ENCODE measurements at regions of chr12 and their contacts with region 1.

Region 1: DNA sequence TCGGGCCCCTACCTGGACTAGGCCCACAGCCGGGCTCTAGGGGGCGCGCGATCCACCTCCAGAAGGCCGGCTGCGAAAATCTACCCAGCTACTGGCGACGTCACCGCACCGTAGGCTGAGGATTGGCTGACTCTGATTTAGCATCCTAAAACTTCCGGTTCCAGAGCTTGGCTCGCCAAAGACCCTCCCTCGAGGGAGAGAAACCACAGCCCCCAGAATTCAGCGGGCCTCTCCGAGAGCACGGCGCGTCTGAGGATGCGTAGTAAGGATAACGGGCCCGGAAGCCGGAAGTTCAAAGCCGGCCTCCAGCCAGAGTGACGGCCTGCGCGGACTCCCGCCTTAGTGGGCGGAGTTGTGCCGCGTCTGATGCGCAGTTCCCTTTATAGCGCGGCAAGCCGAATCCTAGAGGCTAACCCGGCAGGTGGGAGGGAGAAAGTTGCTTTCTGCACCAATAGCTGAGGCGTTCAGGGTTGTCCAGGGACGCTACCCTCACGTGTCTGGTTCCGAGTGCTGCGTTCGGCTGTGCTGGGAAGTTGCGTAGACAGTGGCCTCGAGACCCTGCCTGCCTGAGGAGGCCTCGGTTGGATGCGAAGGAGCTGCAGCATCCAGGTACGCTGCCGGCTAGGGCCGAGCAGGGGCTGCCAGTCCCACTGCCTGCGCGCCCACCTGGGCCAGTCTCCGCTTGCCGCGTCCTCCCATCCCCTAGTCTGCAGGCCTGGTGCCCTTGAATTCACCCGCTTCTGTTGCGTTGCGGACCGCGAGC is at the start of gene COX14:
- DNase-seq: peak; percentile 100
- ATAC-seq: peak; percentile 77
- H3K4me3 ChIP-seq: peak within 1 kb of the TSS; percentile 51 to 99 (median 88)
- H3K4me3 Mint-ChIP-seq: peak within 1 kb of the TSS; percentile 96
- H3K27ac ChIP-seq: peak within 1 kb of the TSS; percentile 85 to 96
- H3K27ac Mint-ChIP-seq: peak within 1 kb of the TSS; percentile 98
- H3K4me1 ChIP-seq: peaks cover 30 to 62% of the 10 kb centered on the region in 2 donors
- H3K4me1 Mint-ChIP-seq: peaks cover 65% of the 10 kb centered on the region
- H3K27me3 ChIP-seq: no peaks in the 10 kb centered on the region
- H3K27me3 Mint-ChIP-seq: no peaks in the 10 kb centered on the region
- CTCF ChIP-seq: peak; percentile 28
- total RNA-seq, gene COX14: 31.8 and 33.8 TPM in 2 replicates

Region 2: DNA sequence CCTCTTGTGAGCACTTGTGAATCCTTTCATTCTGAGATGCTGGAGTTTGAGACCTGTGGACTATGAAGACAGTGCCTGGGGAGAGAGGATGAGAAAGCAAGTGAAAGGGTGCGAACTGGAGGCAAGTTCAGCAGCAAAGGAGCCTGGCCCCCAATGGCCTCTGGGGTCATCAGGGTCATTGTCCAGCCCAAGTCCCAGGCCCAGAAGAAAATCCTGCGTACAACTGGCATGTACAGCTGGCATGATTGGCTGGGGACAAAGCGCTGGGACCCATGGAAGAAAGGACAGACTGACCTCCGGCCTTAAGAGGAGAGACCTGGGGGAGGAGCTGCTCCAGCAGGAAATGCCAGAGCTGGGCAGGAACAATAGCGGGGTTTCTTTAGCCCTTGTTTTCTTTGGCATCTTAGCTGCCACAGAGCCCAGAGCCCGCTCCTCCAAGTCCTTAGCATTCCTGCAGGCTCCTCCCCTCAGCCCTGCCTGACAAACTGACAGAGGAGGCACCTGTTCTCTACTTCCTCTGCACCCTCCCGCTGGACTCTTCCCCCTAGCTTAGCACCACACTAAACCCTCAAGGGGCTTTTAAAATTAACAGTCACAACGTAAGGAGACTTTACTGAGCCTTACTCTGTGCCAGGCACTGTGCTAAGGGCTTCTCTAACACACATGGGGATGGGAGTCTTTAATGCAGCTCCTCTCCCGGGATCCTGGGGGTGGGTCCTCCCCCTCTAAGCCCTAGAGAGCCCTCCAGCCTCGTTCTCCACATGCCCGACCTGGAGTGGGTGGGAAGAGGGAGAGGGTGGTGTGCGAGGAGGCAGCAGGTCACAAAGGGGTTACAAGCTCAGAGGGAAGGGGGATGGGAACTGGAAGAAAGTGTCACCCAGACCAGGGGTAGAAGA is 152.1 kb before region 1 on chr12:
- CTCF ChIA-PET with region 1: no interaction called
- POLR2A ChIA-PET with region 1: no interaction called
- intact Hi-C with region 1: no loop called
- DNase-seq: no peak
- ATAC-seq: no peak
- H3K4me3 ChIP-seq: no peak overlapping the region
- H3K4me3 Mint-ChIP-seq: peak overlapping the region; percentile 56
- H3K27ac ChIP-seq: no peak overlapping the region
- H3K27ac Mint-ChIP-seq: no peak overlapping the region
- H3K4me1 ChIP-seq: peaks cover 11 to 16% of the 10 kb centered on the region in 2 donors
- H3K4me1 Mint-ChIP-seq: peaks cover 9% of the 10 kb centered on the region
- H3K27me3 ChIP-seq: peaks cover 0 to 71% (median 22%) of the 10 kb centered on the region in 4 experiments
- H3K27me3 Mint-ChIP-seq: peaks cover 71% of the 10 kb centered on the region
- CTCF ChIP-seq: no peak

Region 3: GRCh38 chr12:50006789-50007436 is 105.0 kb before region 1 on chr12:
- CTCF ChIA-PET with region 1: no interaction called
- POLR2A ChIA-PET with region 1: no interaction called
- intact Hi-C with region 1: no loop called
- DNase-seq: no peak
- ATAC-seq: no peak
- H3K4me3 ChIP-seq: no peak overlapping the region
- H3K4me3 Mint-ChIP-seq: no peak overlapping the region
- H3K27ac ChIP-seq: no peak overlapping the region
- H3K27ac Mint-ChIP-seq: no peak overlapping the region
- H3K4me1 ChIP-seq: peaks cover 3 to 7% of the 10 kb centered on the region in 2 donors
- H3K4me1 Mint-ChIP-seq: peaks cover 13% of the 10 kb centered on the region
- H3K27me3 ChIP-seq: no peaks in the 10 kb centered on the region
- H3K27me3 Mint-ChIP-seq: no peaks in the 10 kb centered on the region
- CTCF ChIP-seq: no peak

Region 4: DNA sequence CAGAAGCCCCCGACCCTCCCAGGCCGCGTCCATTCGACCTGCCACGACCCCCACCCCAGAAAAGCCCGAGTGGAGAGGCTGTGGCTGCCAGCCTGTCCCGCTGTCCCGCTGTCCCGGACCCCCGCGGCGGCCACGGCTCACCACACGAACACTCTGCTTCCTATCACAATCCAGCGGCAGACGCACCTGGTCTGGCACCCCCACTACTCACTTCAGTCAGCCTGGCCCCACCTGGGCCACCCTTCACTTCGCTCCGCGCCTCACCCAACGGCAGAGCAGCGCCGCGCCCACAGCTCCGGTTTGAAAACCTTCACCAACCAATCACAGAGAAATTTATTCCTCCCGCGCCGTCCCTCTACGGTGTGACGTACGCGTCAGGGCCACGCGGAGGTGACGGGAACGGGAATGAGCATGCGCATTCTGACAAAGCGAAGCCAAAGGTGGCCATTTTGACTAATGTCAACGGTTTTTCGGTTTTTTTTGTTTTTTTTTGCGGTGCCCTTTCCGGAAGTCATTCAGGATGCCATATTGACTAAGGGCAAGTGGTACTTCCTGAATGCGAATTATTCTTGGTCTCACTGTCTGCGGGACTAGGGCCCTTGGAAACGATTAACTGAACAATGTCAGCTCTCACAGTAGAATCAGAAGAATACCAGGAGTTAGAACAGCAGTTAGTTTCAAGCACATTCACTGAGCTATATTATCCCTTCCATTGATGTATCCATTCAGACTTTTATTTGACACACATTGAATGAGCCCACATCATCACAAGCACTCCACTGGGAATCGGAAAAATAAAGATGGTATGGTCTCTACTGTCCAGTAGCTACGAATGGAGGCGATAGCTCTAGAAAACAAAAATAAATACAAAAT is 86.5 kb before region 1 on chr12 and contains the start of gene RACGAP1:
- CTCF ChIA-PET with region 1: interaction called, 10 read pairs
- POLR2A ChIA-PET with region 1: interaction called, 7 read pairs
- intact Hi-C with region 1: loop called (anchors 1 kb)
- DNase-seq: peak; percentile 99
- ATAC-seq: peak; percentile 97
- H3K4me3 ChIP-seq: peak within 1 kb of the TSS; percentile 44 to 75 (median 65)
- H3K4me3 Mint-ChIP-seq: peak within 1 kb of the TSS; percentile 94
- H3K27ac ChIP-seq: peak within 1 kb of the TSS; percentile 52 to 63
- H3K27ac Mint-ChIP-seq: peak within 1 kb of the TSS; percentile 85
- H3K4me1 ChIP-seq: peaks cover 8 to 10% of the 10 kb centered on the region in 2 donors
- H3K4me1 Mint-ChIP-seq: peaks cover 17% of the 10 kb centered on the region
- H3K27me3 ChIP-seq: no peaks in the 10 kb centered on the region
- H3K27me3 Mint-ChIP-seq: no peaks in the 10 kb centered on the region
- CTCF ChIP-seq: no peak
- total RNA-seq, gene RACGAP1: 11.3 and 14.2 TPM in 2 replicates

Region 5: GRCh38 chr12:50101663-50102062 is 10.2 kb before region 1 on chr12:
- CTCF ChIA-PET with region 1: interaction called, 343 read pairs
- POLR2A ChIA-PET with region 1: interaction called, 4 read pairs
- intact Hi-C with region 1: no loop called
- DNase-seq: no peak
- ATAC-seq: no peak
- H3K4me3 ChIP-seq: no peak overlapping the region
- H3K4me3 Mint-ChIP-seq: no peak overlapping the region
- H3K27ac ChIP-seq: no peak overlapping the region
- H3K27ac Mint-ChIP-seq: no peak overlapping the region
- H3K4me1 ChIP-seq: no peaks in the 10 kb centered on the region
- H3K4me1 Mint-ChIP-seq: no peaks in the 10 kb centered on the region
- H3K27me3 ChIP-seq: no peaks in the 10 kb centered on the region
- H3K27me3 Mint-ChIP-seq: no peaks in the 10 kb centered on the region
- CTCF ChIP-seq: no peak

Region 6: GRCh38 chr12:50132505-50133135 is 20.7 kb after region 1 on chr12:
- CTCF ChIA-PET with region 1: interaction called, 18 read pairs
- POLR2A ChIA-PET with region 1: interaction called, 3 read pairs
- intact Hi-C with region 1: no loop called
- DNase-seq: peak; percentile 42
- ATAC-seq: no peak
- H3K4me3 ChIP-seq: no peak overlapping the region
- H3K4me3 Mint-ChIP-seq: no peak overlapping the region
- H3K27ac ChIP-seq: peak overlapping the region in 1 of 2 donors; percentile 35
- H3K27ac Mint-ChIP-seq: peak overlapping the region; percentile 8
- H3K4me1 ChIP-seq: peaks cover 6 to 7% of the 10 kb centered on the region in 2 donors
- H3K4me1 Mint-ChIP-seq: peaks cover 14% of the 10 kb centered on the region
- H3K27me3 ChIP-seq: no peaks in the 10 kb centered on the region
- H3K27me3 Mint-ChIP-seq: no peaks in the 10 kb centered on the region
- CTCF ChIP-seq: peak; percentile 48

Region 7: GRCh38 chr12:50167041-50167828 is 55.4 kb after region 1 on chr12 and contains the start of gene CERS5:
- CTCF ChIA-PET with region 1: interaction called, 51 read pairs
- POLR2A ChIA-PET with region 1: interaction called, 42 read pairs
- intact Hi-C with region 1: loop called (anchors 1 kb)
- DNase-seq: peak; percentile 97
- ATAC-seq: peak; percentile 98
- H3K4me3 ChIP-seq: peak within 1 kb of the TSS; percentile 70 to 99 (median 74)
- H3K4me3 Mint-ChIP-seq: peak within 1 kb of the TSS; percentile 95
- H3K27ac ChIP-seq: peak within 1 kb of the TSS; percentile 83 to 90
- H3K27ac Mint-ChIP-seq: peak within 1 kb of the TSS; percentile 95
- H3K4me1 ChIP-seq: peaks cover 17 to 19% of the 10 kb centered on the region in 2 donors
- H3K4me1 Mint-ChIP-seq: peaks cover 25% of the 10 kb centered on the region
- H3K27me3 ChIP-seq: no peaks in the 10 kb centered on the region
- H3K27me3 Mint-ChIP-seq: no peaks in the 10 kb centered on the region
- CTCF ChIP-seq: no peak
- total RNA-seq, gene CERS5: 70.9 and 72.0 TPM in 2 replicates

Region 8: GRCh38 chr12:50174971-50175715 is 63.3 kb after region 1 on chr12:
- CTCF ChIA-PET with region 1: interaction called, 24 read pairs
- POLR2A ChIA-PET with region 1: interaction called, 3 read pairs
- intact Hi-C with region 1: no loop called
- DNase-seq: peak; percentile 73
- ATAC-seq: no peak
- H3K4me3 ChIP-seq: no peak overlapping the region
- H3K4me3 Mint-ChIP-seq: no peak overlapping the region
- H3K27ac ChIP-seq: no peak overlapping the region
- H3K27ac Mint-ChIP-seq: no peak overlapping the region
- H3K4me1 ChIP-seq: no peaks in the 10 kb centered on the region
- H3K4me1 Mint-ChIP-seq: no peaks in the 10 kb centered on the region
- H3K27me3 ChIP-seq: no peaks in the 10 kb centered on the region
- H3K27me3 Mint-ChIP-seq: no peaks in the 10 kb centered on the region
- CTCF ChIP-seq: peak; percentile 93